Left colon (tissue), 2 donors: ENCODE measurements at regions of chr10 and their contacts with region 1.

Region 1: DNA sequence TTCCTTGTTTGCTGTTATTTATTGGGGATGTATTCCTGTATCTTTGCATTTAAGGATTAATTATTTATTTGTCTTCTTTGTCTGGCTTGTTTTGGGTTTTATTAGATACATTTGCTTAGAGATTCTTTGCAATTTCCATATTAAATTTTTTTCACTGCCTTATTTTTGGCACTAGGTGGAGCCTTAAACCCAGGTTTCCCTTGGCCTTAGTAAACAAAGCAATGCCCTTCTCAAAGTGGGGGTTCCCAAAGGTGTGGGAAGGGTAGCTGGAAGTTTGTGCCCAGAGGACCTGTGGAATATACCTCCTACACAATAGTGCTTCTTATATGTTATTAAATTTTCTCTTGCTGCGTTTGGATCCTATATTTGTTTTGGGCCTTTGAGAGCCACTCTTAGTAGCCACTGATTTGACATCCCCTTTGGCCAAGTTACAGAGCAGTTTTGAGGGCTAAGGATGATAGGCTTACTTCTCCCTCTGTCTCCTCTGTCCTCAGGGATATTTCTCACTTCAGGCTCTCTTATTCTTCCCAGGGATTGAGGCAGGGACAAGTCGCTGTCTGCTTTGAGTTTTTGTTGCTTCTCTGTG is 162.3 kb downstream of the ITGB1 start:
- DNase-seq: no peak
- ATAC-seq: peak; percentile 37

Region 2: DNA sequence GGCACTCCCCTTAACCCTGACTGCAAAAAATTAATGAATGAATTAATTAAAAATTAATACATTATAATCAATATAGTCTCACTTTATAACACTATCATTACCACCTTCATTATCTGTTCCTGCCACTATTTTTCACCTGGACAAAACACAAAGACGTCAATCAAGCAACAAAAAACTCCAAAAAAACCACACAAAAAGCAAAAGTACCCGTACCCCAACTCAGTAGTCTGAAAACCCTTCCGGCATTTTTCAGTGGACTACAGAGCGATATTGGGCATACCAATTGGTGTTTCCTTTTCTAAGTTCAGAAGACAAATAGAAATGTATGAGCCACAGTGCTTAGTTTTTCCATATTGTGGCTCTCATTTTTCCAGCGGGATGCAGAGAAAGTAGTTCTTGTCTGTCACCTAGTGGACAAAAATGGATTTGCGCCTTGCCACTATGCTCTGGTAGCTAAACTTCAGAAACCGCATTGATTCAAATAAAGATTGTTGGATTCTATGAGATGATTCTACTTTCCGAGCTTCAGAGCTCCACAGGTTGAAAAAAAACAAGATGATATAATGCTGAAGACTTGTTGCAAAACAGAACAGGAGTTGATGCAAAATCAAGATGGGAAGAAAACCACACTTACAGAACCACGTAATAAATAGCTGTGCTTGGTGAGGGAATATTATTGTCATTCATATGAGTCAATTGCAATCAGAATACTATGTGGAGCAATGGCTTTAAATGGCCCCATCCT is 213.0 kb after region 1 on chr10:
- intact Hi-C with region 1: loop called (anchors 2 to 10 kb)
- DNase-seq: peak in 1 of 2 donors; percentile 67
- ATAC-seq: peak; percentile 62